ENCODE measurements at regions of chrX and their contacts with region 1.

Region 1: DNA sequence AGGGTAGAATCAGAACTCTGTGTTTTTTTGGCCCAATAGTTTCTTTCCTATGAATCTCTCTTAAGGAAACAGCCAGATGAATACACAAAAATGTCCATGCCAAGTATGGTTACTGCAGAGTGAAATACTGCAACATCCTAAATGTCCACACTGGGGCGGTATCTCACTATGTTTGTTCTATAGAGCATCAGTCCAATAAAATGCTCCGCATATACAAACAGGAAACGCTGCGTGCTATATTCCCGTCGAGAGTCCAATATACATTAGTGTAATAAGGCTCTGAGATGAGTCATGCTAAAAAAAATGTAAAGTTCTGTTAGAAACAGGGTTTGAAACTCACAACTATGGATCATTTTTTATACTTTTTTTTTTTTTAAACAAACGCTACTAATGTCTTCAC is 72.9 kb upstream of the ENOX2 start:
- DNase-seq: no peak
- ATAC-seq: peak in 1 of 4 donors; percentile 60
- H3K4me3 ChIP-seq: no peak overlapping the region
- H3K27ac ChIP-seq: no peak overlapping the region
- H3K4me1 ChIP-seq: no peaks in the 10 kb centered on the region
- H3K27me3 ChIP-seq: peaks cover 0 to 57% (median 0%) of the 10 kb centered on the region in 9 donors
- CTCF ChIP-seq: peak; percentile 20 to 56 (median 40)
- POLR2A ChIP-seq: no peak

Region 2: GRCh38 chrX:131032354-131033230 is 56.6 kb after region 1 on chrX:
- intact Hi-C with region 1: no loop called
- DNase-seq: no peak
- ATAC-seq: no peak
- H3K4me3 ChIP-seq: no peak overlapping the region
- H3K27ac ChIP-seq: no peak overlapping the region
- H3K4me1 ChIP-seq: no peaks in the 10 kb centered on the region
- H3K27me3 ChIP-seq: peaks cover 0 to 23% (median 0%) of the 10 kb centered on the region in 9 donors
- CTCF ChIP-seq: no peak
- POLR2A ChIP-seq: no peak

Region 3: GRCh38 chrX:131633285-131633917 is 657.5 kb after region 1 on chrX:
- intact Hi-C with region 1: loop called in 8 of 10 experiments (anchors 1 to 5 kb)
- DNase-seq: peak in 3 of 5 donors; percentile 20 to 37 (median 22)
- ATAC-seq: peak in 3 of 4 donors; percentile 52 to 82 (median 77)
- H3K4me3 ChIP-seq: no peak overlapping the region
- H3K27ac ChIP-seq: no peak overlapping the region
- H3K4me1 ChIP-seq: no peaks in the 10 kb centered on the region
- H3K27me3 ChIP-seq: peaks cover 0 to 38% (median 0%) of the 10 kb centered on the region in 9 donors
- CTCF ChIP-seq: peak; percentile 53 to 85 (median 67)
- POLR2A ChIP-seq: no peak

Region 4: DNA sequence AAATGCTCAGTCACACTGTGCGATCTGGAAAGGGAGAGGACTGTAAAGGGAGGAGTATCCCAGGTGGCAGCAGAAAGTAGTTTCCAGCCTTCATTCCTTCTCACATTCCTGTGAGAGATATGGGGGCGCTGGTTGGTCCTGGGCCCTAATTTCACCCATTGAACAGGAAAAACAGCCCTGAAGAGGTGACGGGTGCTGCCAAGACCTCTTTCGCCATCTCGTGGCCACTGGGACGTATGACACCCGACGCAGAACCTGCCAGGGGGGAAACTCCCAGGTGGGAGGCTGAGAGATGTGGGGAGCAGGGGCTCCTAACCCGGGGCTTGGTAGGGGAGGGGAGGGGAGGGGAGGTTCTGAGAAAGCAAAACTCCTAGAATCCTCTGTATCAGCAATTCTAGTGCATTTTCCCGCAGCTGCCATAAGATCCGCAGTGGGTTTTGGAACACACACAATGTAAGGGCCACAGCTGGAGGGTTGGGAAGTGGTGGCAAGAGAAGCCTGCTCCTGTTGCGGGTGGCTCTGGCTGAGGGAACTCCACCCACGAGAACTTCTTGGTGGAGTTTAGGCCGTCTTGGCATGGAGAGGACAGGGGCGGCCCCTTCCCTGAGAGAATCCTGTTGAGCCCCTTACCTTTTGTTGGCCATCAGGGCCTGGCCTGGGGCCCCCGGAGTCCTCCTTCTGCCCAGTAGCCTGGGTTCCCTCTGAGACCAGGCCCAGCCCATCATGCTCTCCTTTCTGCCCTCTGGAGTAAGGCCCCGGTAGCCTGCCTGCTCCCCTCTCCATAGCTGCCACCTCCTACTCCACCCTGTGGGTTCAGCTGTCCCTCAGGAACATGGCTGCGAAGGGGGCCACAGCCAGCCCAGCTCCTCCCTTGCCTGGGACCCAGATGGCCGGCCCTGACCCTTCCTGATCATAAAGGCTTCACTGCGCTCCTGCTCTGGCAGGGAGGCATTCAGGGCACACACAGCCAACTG is 702.0 kb after region 1 on chrX:
- intact Hi-C with region 1: loop called in 3 of 10 experiments (anchors 5 kb)
- DNase-seq: peak in 2 of 5 donors; percentile 16 to 29
- ATAC-seq: peak in 1 of 4 donors; percentile 31
- H3K4me3 ChIP-seq: no peak overlapping the region
- H3K27ac ChIP-seq: no peak overlapping the region
- H3K4me1 ChIP-seq: no peaks in the 10 kb centered on the region
- H3K27me3 ChIP-seq: peaks cover 0 to 36% (median 0%) of the 10 kb centered on the region in 9 donors
- CTCF ChIP-seq: peak; percentile 13 to 68 (median 42)
- POLR2A ChIP-seq: no peak

Measured in heart left ventricle (tissue), 16 donors.